ENCODE measurements at regions of chrX and their contacts with region 1.

Region 1: DNA sequence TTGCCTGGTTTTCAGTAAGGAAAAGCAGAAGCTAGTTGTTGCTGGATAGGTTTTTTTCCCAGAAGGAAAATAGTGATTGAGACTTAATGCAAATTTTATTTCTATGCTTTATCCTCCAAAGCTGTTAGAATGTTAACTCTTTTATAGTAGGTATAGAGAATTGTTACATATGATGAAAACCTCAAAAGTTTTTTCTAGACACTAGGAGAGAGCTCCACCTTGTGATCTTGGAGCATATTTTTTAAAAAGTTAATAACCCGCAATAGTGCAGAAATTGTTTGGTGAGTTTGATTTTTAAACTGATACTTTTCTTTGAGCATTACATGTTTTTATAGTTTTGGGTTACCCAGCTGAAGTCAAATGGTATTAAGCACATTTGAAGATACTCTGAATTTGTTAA is 56.5 kb downstream of the STAG2 start:
- DNase-seq: no peak
- H3K4me3 ChIP-seq: no peak overlapping the region
- H3K27ac ChIP-seq: no peak overlapping the region
- H3K4me1 ChIP-seq: no peaks in the 10 kb centered on the region
- H3K27me3 ChIP-seq: no peaks in the 10 kb centered on the region
- CTCF ChIP-seq: no peak; the same call in 1 of the 2 replicates

Region 2: GRCh38 chrX:123818243-123818642 is 199.8 kb before region 1 on chrX:
- CTCF ChIA-PET with region 1: no interaction called
- POLR2A ChIA-PET with region 1: no interaction called
- intact Hi-C with region 1: no loop called
- DNase-seq: peak; percentile 34 to 89
- H3K4me3 ChIP-seq: no peak overlapping the region
- H3K27ac ChIP-seq: peak overlapping the region; percentile 61
- H3K4me1 ChIP-seq: peaks cover 36% of the 10 kb centered on the region
- H3K27me3 ChIP-seq: no peaks in the 10 kb centered on the region
- CTCF ChIP-seq: no peak

Region 3: GRCh38 chrX:123884809-123885408 is 133.1 kb before region 1 on chrX:
- CTCF ChIA-PET with region 1: interaction called, 10 read pairs
- POLR2A ChIA-PET with region 1: no interaction called
- intact Hi-C with region 1: no loop called
- DNase-seq: peak; percentile 21 to 66
- H3K4me3 ChIP-seq: no peak overlapping the region
- H3K27ac ChIP-seq: no peak overlapping the region
- H3K4me1 ChIP-seq: peaks cover 38% of the 10 kb centered on the region
- H3K27me3 ChIP-seq: no peaks in the 10 kb centered on the region
- CTCF ChIP-seq: peak; percentile 79

Region 4: GRCh38 chrX:125137521-125137920 is 1119.5 kb after region 1 on chrX:
- CTCF ChIA-PET with region 1: no interaction called
- POLR2A ChIA-PET with region 1: no interaction called
- intact Hi-C with region 1: no loop called
- DNase-seq: no peak
- H3K4me3 ChIP-seq: no peak overlapping the region
- H3K27ac ChIP-seq: no peak overlapping the region
- H3K4me1 ChIP-seq: no peaks in the 10 kb centered on the region
- H3K27me3 ChIP-seq: no peaks in the 10 kb centered on the region
- CTCF ChIP-seq: no peak